Posterior vena cava (tissue), 2 donors: ENCODE measurements at regions of chr5 and their contacts with region 1.

Region 1: GRCh38 chr5:35331956-35332950 is 102.0 kb upstream of the PRLR start:
- DNase-seq: no peak

Region 2: DNA sequence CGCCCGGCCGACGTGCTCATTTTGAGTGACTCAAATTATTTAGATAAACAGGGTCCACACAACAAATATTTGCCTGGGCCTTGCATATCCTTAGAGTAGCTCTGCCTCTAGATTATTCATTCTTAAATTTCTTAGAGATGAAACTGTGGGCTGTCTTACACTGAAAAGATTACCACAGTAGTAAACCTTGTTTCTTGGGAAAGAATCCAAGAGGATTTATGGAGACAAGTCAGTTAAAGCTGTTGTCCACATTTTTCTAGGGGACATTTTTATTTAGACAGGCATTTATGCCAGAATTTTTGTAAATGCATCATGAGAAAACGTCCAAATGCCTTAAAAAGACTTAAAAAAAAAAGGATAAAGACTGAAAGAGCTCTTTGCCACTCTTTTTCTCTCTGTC is 1002.1 kb after region 1 on chr5:
- intact Hi-C with region 1: loop called in 1 of 2 experiments (anchors 10 kb)
- DNase-seq: no peak